ENCODE measurements at regions of chrX and their contacts with region 1.

Region 1: DNA sequence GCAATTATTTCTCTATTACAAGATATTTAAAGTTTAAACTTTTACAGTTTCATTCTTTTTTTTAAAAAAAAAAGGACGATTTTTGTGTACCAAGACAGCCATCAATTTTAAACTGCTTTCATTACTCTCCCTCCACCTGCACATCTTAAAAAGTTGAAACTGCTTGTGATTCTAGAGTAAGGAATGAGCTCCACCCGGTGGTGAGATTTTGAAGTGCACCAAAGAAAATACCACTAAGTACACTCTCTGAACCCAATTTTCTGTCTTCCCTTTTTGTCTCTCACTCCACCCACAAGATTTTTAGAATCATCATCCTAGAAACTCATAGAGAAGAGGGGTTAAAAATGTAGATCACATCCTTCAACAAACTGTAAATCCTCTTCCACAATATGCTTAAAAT is 91.3 kb upstream of the WDR44 start:
- DNase-seq: peak in 2 of 5 donors; percentile 8 to 25
- ATAC-seq: no peak
- H3K4me3 ChIP-seq: no peak overlapping the region
- H3K27ac ChIP-seq: no peak overlapping the region
- H3K4me1 ChIP-seq: no peaks in the 10 kb centered on the region
- H3K27me3 ChIP-seq: peaks cover 0 to 4% (median 0%) of the 10 kb centered on the region in 9 donors
- CTCF ChIP-seq: peak; percentile 41 to 72 (median 62)
- POLR2A ChIP-seq: no peak

Region 2: DNA sequence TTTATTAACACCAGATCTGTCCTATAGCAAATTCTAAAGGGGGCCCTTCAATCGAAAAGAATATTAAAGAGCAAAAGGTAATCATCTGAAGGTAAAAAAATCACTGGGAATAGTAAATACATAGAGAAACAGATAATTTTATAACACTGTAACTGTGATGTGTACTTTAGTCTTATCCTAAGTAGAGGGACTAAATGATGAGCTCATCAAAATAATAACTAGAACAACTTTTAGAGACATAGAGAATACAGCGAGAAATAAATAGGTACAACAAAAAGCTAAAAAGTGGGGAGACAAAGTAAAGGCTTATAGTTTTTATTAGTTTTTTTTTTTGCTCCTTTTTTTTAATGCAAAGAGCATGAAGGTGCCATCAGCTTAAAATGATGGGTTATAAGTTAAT is 1774.6 kb before region 1 on chrX:
- intact Hi-C with region 1: loop called in 2 of 10 experiments (anchors 10 kb)
- DNase-seq: no peak
- ATAC-seq: no peak
- H3K4me3 ChIP-seq: no peak overlapping the region
- H3K27ac ChIP-seq: no peak overlapping the region
- H3K4me1 ChIP-seq: no peaks in the 10 kb centered on the region
- H3K27me3 ChIP-seq: no peaks in the 10 kb centered on the region
- CTCF ChIP-seq: no peak
- POLR2A ChIP-seq: no peak

Region 3: DNA sequence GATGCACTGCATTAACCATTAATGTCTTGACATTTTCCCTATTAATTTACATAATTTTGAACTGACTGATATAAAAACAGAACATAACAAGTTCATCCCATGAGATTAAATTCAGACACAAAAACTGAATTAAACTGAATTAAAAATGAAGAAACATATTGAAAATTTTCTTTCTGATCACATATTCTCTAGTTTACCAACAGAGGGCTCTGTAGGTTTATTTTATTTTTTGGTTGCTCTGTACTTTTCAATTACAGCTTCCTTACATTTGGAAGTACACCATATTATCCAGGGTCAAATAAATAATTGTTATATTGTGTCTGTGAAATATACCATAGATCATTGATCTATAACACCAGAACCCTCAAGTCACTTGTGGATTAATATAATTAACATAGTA is 1764.5 kb before region 1 on chrX:
- intact Hi-C with region 1: loop called in 3 of 10 experiments (anchors 10 kb)
- DNase-seq: no peak
- ATAC-seq: no peak
- H3K4me3 ChIP-seq: no peak overlapping the region
- H3K27ac ChIP-seq: no peak overlapping the region
- H3K4me1 ChIP-seq: no peaks in the 10 kb centered on the region
- H3K27me3 ChIP-seq: no peaks in the 10 kb centered on the region
- CTCF ChIP-seq: peak in 8 of 12 donors; percentile 13 to 37 (median 28)
- POLR2A ChIP-seq: no peak

Region 4: DNA sequence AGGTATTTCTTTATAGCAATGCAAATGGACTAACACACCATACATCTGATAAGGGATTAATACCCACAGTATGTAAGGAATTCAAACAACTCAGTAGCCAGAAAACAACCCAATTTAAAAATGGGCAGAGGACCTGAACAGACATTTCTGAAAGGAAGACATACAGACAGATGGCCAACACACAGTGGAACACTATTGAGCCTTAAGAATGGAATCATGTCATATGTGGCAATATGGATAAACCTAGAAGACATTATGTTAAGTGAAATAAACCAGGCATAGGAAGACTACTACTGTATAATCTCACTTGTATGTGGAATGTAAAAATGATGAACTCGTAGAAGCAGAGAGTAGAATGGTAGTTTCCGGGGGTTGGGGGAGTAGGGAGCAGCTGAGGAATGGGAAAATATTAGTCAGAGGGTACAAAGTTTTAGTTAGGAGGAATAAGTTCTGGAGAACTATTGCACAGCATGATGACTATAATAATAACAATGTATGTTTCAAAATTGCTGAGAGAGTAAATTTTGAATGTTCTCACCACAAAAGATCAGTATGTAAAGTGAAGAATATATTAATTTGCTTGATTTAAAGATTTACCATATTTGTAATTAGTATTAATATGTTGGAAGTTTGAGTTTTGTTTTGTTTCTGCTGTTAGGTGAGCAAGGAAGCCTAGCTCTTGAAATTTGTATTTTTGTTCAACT is 116.5 kb after region 1 on chrX:
- intact Hi-C with region 1: no loop called
- DNase-seq: no peak
- ATAC-seq: no peak
- H3K4me3 ChIP-seq: no peak overlapping the region
- H3K27ac ChIP-seq: no peak overlapping the region
- H3K4me1 ChIP-seq: peaks cover 0 to 3% (median 0%) of the 10 kb centered on the region in 12 donors
- H3K27me3 ChIP-seq: no peaks in the 10 kb centered on the region
- CTCF ChIP-seq: no peak
- POLR2A ChIP-seq: no peak

Measured in heart left ventricle (tissue), 16 donors.